Endothelial cell of umbilical vein (primary cell): ENCODE measurements at regions of chr5 and their contacts with region 1.

Region 1: GRCh38 chr5:111550279-111551020 is 38.1 kb upstream of the STARD4 start:
- DNase-seq: peak; percentile 96
- H3K4me3 ChIP-seq: peak overlapping the region in 1 of 3 experiments; percentile 37
- H3K27ac ChIP-seq: peak overlapping the region; percentile 98
- H3K4me1 ChIP-seq: peaks cover 25% of the 10 kb centered on the region
- H3K27me3 ChIP-seq: no peaks in the 10 kb centered on the region
- CTCF ChIP-seq: peak; percentile 51 to 60
- POLR2A ChIP-seq: no peak

Region 2: GRCh38 chr5:111223889-111224563 is 326.4 kb before region 1 on chr5 and contains the start of gene CAMK4:
- CTCF ChIA-PET with region 1: no interaction called
- POLR2A ChIA-PET with region 1: no interaction called
- dilution Hi-C with region 1: no loop called
- intact Hi-C with region 1: no loop called
- DNase-seq: peak; percentile 69
- H3K4me3 ChIP-seq: peak within 1 kb of the TSS; percentile 34 to 62 (median 60)
- H3K27ac ChIP-seq: no peak within 1 kb of the TSS
- H3K4me1 ChIP-seq: peaks cover 5% of the 10 kb centered on the region
- H3K27me3 ChIP-seq: peaks cover 0 to 2% of the 10 kb centered on the region in 2 experiments
- CTCF ChIP-seq: peak in 1 of 2 donors; percentile 37
- POLR2A ChIP-seq: no peak
- total RNA-seq, gene CAMK4: 5.4 and 8.2 TPM in 2 replicates

Region 3: DNA sequence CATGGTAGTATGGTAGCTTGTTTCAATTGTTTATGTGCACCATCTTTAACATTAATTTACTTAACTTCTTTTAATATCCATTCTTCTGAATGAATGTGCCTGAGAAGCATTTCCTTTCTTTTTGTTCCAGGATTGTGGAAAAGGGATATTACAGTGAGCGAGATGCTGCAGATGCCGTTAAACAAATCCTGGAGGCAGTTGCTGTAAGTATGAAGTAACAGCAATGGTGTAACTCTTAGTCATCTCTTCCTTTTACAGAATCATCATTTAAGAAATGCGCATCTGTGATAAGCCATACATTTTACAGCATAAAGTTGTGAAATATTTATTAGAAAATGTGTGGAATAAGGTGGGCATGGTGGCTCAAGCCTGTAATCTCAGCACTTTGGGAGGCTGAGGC is 155.9 kb before region 1 on chr5:
- CTCF ChIA-PET with region 1: no interaction called
- POLR2A ChIA-PET with region 1: no interaction called
- dilution Hi-C with region 1: no loop called
- intact Hi-C with region 1: no loop called
- DNase-seq: peak; percentile 51
- H3K4me3 ChIP-seq: no peak overlapping the region
- H3K27ac ChIP-seq: no peak overlapping the region
- H3K4me1 ChIP-seq: no peaks in the 10 kb centered on the region
- H3K27me3 ChIP-seq: no peaks in the 10 kb centered on the region
- CTCF ChIP-seq: no peak
- POLR2A ChIP-seq: no peak

Region 4: DNA sequence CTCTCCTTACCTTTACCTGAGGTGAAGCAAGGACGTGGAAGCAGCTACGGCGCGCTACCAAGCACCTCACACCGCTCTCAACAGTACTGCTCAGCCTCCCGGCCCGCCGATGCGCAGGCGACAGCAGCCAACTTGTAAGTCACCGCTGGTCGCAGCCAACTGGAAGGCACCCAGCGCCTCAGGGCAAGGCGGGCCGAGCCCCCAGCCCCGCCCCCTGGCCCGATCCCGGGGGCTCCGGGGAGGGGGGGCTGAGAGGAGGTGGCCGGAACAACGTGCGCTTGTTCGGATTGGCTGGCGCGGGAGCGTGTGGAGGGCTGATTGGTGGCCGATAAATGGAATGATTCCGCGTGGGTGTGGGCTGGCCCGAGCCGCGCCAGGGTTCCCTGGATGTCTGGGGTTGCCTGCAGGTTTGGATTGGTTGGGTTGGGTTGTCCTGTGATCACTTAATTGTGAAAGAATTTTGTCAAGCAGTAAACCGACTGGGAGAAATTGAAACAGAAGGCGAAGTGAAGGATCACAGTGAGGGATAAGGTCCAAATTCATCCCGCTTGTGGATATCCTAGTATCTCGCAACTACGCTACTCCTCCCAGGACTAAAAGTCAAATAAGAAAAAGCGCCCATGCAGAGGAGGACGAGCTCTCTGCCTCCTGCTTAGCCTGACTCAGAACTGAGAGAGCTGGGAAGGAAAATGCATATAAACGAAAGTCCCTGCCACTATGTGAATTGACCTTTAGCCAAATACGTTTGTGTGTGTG is 37.9 kb before region 1 on chr5 and contains the start of gene STARD4:
- CTCF ChIA-PET with region 1: interaction called, 7 read pairs
- POLR2A ChIA-PET with region 1: no interaction called
- dilution Hi-C with region 1: no loop called
- intact Hi-C with region 1: loop called (anchors 1 kb)
- DNase-seq: peak; percentile 97
- H3K4me3 ChIP-seq: peak within 1 kb of the TSS; percentile 72 to 97 (median 81)
- H3K27ac ChIP-seq: peak within 1 kb of the TSS; percentile 95
- H3K4me1 ChIP-seq: peaks cover 30% of the 10 kb centered on the region
- H3K27me3 ChIP-seq: no peaks in the 10 kb centered on the region
- CTCF ChIP-seq: no peak
- POLR2A ChIP-seq: peak; percentile 61
- total RNA-seq, gene STARD4: 77.1 and 87.8 TPM in 2 replicates

Region 5: DNA sequence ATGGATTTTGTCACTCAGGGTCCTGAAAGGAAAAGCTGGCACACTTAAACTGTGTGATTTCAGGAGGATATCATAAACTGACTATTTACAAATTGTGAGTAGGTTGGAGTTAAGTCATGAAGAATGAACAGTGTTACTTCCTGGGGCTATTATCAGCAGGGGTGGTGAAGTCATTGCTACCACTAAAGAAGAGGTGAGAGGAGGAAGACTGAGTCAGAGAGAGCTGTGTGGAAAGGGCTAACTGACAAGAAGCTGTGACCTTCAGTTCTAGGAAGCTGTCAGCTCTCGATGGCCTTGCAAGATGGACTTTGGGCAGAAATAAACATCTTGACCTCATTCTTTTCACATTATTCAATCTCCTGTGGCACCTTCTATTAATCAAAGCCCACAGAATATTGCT is 34.2 kb after region 1 on chr5:
- CTCF ChIA-PET with region 1: interaction called, 11 read pairs
- POLR2A ChIA-PET with region 1: no interaction called
- dilution Hi-C with region 1: no loop called
- intact Hi-C with region 1: loop called (anchors 1 kb)
- DNase-seq: peak; percentile 90
- H3K4me3 ChIP-seq: no peak overlapping the region
- H3K27ac ChIP-seq: peak overlapping the region; percentile 66
- H3K4me1 ChIP-seq: peaks cover 29% of the 10 kb centered on the region
- H3K27me3 ChIP-seq: no peaks in the 10 kb centered on the region
- CTCF ChIP-seq: no peak
- POLR2A ChIP-seq: no peak

Region 6: DNA sequence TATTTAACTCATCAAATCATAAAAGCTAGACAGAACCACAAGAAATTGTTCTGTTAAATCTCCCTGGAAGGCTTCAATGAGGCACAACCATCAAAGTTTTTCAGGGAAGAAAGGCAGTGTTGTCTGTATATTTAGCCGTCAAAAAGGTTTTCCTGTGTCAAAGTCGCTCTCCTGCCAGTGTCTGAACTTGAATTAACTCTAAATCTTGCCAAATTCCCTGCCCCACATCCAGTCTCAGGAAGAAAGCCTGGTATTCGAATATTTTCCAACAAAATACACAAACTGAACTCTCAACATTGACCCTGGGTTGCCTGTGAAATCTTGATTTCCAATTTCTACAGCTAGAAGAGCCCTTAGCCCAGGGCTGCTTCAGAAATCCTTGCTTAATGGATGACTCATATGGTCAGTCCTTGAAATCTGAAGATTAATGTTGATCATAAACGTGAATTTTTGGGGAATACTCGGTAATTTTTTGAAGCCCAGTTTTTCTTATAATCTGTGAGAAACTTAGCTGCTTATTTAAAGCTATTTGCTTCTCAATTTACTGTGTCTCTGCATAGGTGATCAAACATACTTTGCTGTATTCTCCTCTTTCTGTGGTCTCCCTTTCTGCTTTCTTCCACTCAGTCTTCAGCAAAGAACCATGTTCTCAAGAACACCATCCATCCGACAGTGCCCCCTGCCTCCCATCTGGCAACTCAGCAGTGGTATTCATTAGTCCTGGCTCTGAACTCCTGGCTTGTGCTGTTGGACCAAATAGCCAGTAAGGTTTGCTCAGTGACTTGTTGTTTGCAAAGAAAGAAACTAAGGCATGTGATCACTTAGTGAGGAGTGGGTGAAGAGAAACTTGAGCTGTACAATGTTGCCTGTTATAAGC is 147.7 kb after region 1 on chr5:
- CTCF ChIA-PET with region 1: interaction called, 87 read pairs
- POLR2A ChIA-PET with region 1: no interaction called
- dilution Hi-C with region 1: no loop called
- intact Hi-C with region 1: loop called (anchors 1 kb)
- DNase-seq: peak; percentile 88
- H3K4me3 ChIP-seq: no peak overlapping the region
- H3K27ac ChIP-seq: peak overlapping the region; percentile 49
- H3K4me1 ChIP-seq: peaks cover 12% of the 10 kb centered on the region
- H3K27me3 ChIP-seq: no peaks in the 10 kb centered on the region
- CTCF ChIP-seq: peak; percentile 57 to 59
- POLR2A ChIP-seq: no peak

Region 7: DNA sequence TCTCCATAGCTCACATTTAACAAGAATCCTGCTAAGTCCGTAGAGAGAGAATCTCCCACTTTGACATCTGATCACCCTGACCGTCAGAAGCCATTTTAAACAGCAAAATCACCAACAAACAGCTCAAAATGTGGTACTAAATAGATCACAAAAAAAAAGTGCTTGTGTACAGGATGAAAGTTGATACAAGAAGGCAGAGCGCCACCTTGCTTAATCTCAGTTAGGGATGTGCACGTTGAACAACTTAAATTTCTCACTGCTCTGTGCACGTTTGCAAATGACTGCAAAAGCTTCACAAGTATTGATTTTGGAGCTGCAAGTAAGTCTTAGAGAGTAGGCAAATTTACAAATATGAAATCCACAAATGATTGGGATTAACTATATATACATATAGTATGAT is 269.6 kb after region 1 on chr5:
- CTCF ChIA-PET with region 1: interaction called, 13 read pairs
- POLR2A ChIA-PET with region 1: no interaction called
- dilution Hi-C with region 1: no loop called
- intact Hi-C with region 1: no loop called
- DNase-seq: no peak
- H3K4me3 ChIP-seq: no peak overlapping the region
- H3K27ac ChIP-seq: no peak overlapping the region
- H3K4me1 ChIP-seq: no peaks in the 10 kb centered on the region
- H3K27me3 ChIP-seq: no peaks in the 10 kb centered on the region
- CTCF ChIP-seq: no peak
- POLR2A ChIP-seq: no peak

Region 8: DNA sequence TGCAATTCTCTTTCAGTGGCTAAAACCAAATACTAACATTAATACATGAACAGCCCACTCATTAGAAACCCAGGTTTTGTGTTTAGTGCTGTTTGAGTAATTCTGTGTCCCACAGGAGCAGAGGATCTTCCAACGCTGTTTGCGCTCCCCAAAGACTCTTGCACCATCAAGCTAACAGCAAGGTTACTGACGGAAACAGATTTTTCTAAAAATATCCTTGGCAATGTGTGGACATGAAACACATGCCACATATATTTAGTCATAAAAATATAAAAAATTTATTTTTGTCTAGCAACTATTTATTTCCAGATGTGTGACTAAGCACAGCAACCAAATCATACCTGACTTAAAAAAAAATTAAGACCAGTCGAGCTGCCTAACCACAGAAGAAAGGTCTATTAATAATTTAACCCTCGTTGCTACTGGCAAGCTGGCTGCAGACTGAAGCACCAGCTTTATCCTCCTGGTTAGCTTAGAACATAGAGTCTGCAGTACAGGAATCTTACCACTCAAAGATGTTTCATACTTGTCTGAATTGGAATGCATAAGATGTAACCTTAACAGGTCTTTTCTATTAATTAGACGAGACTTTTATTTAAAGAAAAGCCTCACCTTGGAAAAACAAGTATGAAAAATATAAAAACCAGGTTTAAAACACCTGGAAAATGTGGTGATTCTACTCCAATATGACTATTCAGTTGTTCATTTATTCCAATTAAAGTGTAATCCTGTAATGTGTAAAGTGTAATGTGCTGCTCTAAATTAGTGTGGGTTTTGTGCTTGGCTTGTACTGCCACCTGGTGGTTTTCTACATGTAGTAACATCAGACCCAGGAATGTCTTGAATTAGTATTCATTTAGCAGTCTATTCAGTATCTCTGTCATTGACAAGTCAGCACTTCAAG is 596.1 kb after region 1 on chr5:
- CTCF ChIA-PET with region 1: interaction called, 71 read pairs
- POLR2A ChIA-PET with region 1: no interaction called
- dilution Hi-C with region 1: no loop called
- intact Hi-C with region 1: loop called (anchors 1 kb)
- DNase-seq: peak; percentile 81
- H3K4me3 ChIP-seq: no peak overlapping the region
- H3K27ac ChIP-seq: no peak overlapping the region
- H3K4me1 ChIP-seq: peaks cover 13% of the 10 kb centered on the region
- H3K27me3 ChIP-seq: no peaks in the 10 kb centered on the region
- CTCF ChIP-seq: peak; percentile 45 to 49
- POLR2A ChIP-seq: no peak

Region 9: DNA sequence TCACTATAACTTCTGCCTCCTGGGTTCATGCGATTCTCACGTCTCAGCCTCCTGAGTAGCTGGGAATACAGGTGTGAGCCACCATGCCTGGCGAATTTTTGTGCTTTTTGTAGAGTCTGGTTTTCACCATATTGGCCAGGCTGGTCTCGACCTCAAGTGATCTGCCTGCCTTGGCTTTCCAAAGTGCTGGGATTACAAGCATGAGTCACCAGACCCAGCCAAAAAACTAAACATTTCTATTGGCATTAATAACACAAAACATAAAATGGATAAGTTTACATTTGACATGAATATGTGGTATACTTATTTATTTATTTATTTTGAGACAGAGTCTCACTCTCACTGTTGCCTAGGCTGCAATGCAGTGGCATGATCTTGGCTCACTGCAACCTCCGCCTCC is 1385.2 kb after region 1 on chr5:
- CTCF ChIA-PET with region 1: no interaction called
- POLR2A ChIA-PET with region 1: no interaction called
- dilution Hi-C with region 1: no loop called
- intact Hi-C with region 1: no loop called
- DNase-seq: no peak
- H3K4me3 ChIP-seq: no peak overlapping the region
- H3K27ac ChIP-seq: no peak overlapping the region
- H3K4me1 ChIP-seq: peaks cover 2% of the 10 kb centered on the region
- H3K27me3 ChIP-seq: no peaks in the 10 kb centered on the region
- CTCF ChIP-seq: no peak
- POLR2A ChIP-seq: no peak